Heart right ventricle (tissue), 16 donors: ENCODE measurements at regions of chr9 and their contacts with region 1.

Region 1: GRCh38 chr9:74800226-74800625 is 87.5 kb downstream of the TRPM6 start:
- DNase-seq: no peak
- ATAC-seq: no peak
- H3K4me3 ChIP-seq: no peak overlapping the region
- H3K27ac ChIP-seq: no peak overlapping the region
- H3K4me1 ChIP-seq: no peaks in the 10 kb centered on the region
- H3K27me3 ChIP-seq: no peaks in the 10 kb centered on the region
- CTCF ChIP-seq: no peak

Region 2: GRCh38 chr9:74570879-74571512 is 229.2 kb before region 1 on chr9:
- intact Hi-C with region 1: no loop called
- DNase-seq: no peak
- ATAC-seq: no peak
- H3K4me3 ChIP-seq: no peak overlapping the region
- H3K27ac ChIP-seq: no peak overlapping the region
- H3K4me1 ChIP-seq: peaks cover 0 to 4% (median 0%) of the 10 kb centered on the region in 9 donors
- H3K27me3 ChIP-seq: no peaks in the 10 kb centered on the region
- CTCF ChIP-seq: peak; percentile 41 to 72 (median 61)

Region 3: GRCh38 chr9:74821636-74822035 is 21.4 kb after region 1 on chr9:
- intact Hi-C with region 1: loop called in 1 of 10 experiments (anchors 2 kb)
- DNase-seq: no peak
- ATAC-seq: no peak
- H3K4me3 ChIP-seq: no peak overlapping the region
- H3K27ac ChIP-seq: no peak overlapping the region
- H3K4me1 ChIP-seq: peaks cover 0 to 12% (median 0%) of the 10 kb centered on the region in 9 donors
- H3K27me3 ChIP-seq: no peaks in the 10 kb centered on the region
- CTCF ChIP-seq: no peak

Region 4: DNA sequence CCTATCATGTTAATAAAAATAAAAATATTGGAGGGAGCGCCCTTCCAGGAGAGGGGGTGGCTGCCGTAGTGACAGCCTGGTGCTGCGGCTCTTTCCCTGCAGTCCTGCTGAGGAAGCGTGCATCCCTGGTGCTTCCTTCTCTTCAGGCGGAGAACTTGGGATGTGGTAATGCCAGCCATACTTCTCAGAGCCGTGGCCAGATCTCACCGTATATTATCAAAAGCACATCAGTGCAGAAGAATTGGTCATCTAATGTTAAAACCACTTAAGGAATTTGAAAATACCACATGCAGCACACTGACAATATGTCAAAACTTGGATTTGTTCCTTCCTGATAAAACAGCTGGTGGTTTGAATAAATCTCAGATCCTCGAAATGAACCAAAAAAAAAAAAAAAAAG is 134.8 kb after region 1 on chr9:
- intact Hi-C with region 1: loop called in 1 of 10 experiments (anchors 10 kb)
- DNase-seq: no peak
- ATAC-seq: no peak
- H3K4me3 ChIP-seq: no peak overlapping the region
- H3K27ac ChIP-seq: no peak overlapping the region
- H3K4me1 ChIP-seq: no peaks in the 10 kb centered on the region
- H3K27me3 ChIP-seq: no peaks in the 10 kb centered on the region
- CTCF ChIP-seq: no peak

Region 5: DNA sequence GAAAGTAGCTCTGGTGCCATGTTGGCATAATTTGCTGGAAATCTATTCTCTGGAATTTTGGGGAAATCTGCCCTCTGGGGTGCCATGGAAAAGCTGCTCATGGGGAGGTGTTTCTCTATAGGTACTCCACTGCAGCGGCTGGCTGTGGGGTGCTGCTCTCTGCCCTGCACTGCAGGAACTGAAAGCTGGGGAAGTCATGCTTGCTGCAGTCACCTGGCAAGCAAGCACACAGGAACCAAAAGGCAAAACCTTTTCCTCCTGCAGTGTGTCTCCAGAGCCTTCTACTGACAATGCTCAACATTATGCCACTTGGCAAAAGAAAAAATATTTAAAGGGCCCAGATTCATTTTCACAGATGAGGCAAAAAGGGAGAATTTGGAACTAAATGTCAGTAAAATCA is 253.6 kb after region 1 on chr9:
- intact Hi-C with region 1: no loop called
- DNase-seq: no peak
- ATAC-seq: no peak
- H3K4me3 ChIP-seq: no peak overlapping the region
- H3K27ac ChIP-seq: no peak overlapping the region
- H3K4me1 ChIP-seq: no peaks in the 10 kb centered on the region
- H3K27me3 ChIP-seq: no peaks in the 10 kb centered on the region
- CTCF ChIP-seq: no peak